H1 (cell line): ENCODE measurements at regions of chr12 and their contacts with region 1.

Region 1: GRCh38 chr12:53321074-53321814 is at the start of gene AAAS:
- DNase-seq: peak; percentile 76 to 98
- H3K4me3 ChIP-seq: peak within 1 kb of the TSS; percentile 71 to 97 (median 94)
- H3K27ac ChIP-seq: peak within 1 kb of the TSS; percentile 95
- H3K4me1 ChIP-seq: peaks cover 0 to 13% (median 9%) of the 10 kb centered on the region in 4 experiments; a peak in 5 of 7 replicates
- H3K27me3 ChIP-seq: peaks cover 1 to 30% (median 23%) of the 10 kb centered on the region in 4 experiments
- CTCF ChIP-seq: peak; percentile 85 to 99 (median 98)
- EP300 ChIP-seq: no peak
- POLR2A ChIP-seq: peak; percentile 86 to 93
- RAD21 ChIP-seq: peak; percentile 21 to 48; a peak in 2 of 4 replicates
- total RNA-seq, gene AAAS: 66.1 and 68.2 TPM in 2 replicates

Region 2: GRCh38 chr12:53042607-53043454 is 278.4 kb before region 1 on chr12:
- CTCF ChIA-PET with region 1: no interaction called
- POLR2A ChIA-PET with region 1: no interaction called
- DNase-seq: no peak
- H3K4me3 ChIP-seq: no peak overlapping the region
- H3K27ac ChIP-seq: no peak overlapping the region
- H3K4me1 ChIP-seq: peaks cover 16 to 35% (median 22%) of the 10 kb centered on the region in 4 experiments
- H3K27me3 ChIP-seq: peaks cover 0 to 20% (median 17%) of the 10 kb centered on the region in 4 experiments; a peak in 6 of 7 replicates
- CTCF ChIP-seq: no peak
- EP300 ChIP-seq: no peak
- POLR2A ChIP-seq: no peak
- RAD21 ChIP-seq: no peak

Region 3: GRCh38 chr12:53068811-53069585 is 252.2 kb before region 1 on chr12:
- CTCF ChIA-PET with region 1: no interaction called
- POLR2A ChIA-PET with region 1: no interaction called
- DNase-seq: no peak
- H3K4me3 ChIP-seq: no peak overlapping the region
- H3K27ac ChIP-seq: no peak overlapping the region
- H3K4me1 ChIP-seq: peaks cover 4 to 16% (median 10%) of the 10 kb centered on the region in 4 experiments
- H3K27me3 ChIP-seq: peaks cover 0 to 2% (median 0%) of the 10 kb centered on the region in 4 experiments; a peak in 2 of 7 replicates
- CTCF ChIP-seq: no peak
- EP300 ChIP-seq: no peak
- POLR2A ChIP-seq: no peak
- RAD21 ChIP-seq: no peak

Region 4: GRCh38 chr12:53151039-53151438 is 170.2 kb before region 1 on chr12:
- CTCF ChIA-PET with region 1: no interaction called
- POLR2A ChIA-PET with region 1: no interaction called
- DNase-seq: peak in 1 of 2 experiments; percentile 35
- H3K4me3 ChIP-seq: no peak overlapping the region
- H3K27ac ChIP-seq: no peak overlapping the region
- H3K4me1 ChIP-seq: peaks cover 0 to 2% (median 0%) of the 10 kb centered on the region in 4 experiments; a peak in 2 of 7 replicates
- H3K27me3 ChIP-seq: no peaks in the 10 kb centered on the region; a peak in 1 of 7 replicates
- CTCF ChIP-seq: no peak
- EP300 ChIP-seq: no peak
- POLR2A ChIP-seq: no peak
- RAD21 ChIP-seq: no peak

Region 5: DNA sequence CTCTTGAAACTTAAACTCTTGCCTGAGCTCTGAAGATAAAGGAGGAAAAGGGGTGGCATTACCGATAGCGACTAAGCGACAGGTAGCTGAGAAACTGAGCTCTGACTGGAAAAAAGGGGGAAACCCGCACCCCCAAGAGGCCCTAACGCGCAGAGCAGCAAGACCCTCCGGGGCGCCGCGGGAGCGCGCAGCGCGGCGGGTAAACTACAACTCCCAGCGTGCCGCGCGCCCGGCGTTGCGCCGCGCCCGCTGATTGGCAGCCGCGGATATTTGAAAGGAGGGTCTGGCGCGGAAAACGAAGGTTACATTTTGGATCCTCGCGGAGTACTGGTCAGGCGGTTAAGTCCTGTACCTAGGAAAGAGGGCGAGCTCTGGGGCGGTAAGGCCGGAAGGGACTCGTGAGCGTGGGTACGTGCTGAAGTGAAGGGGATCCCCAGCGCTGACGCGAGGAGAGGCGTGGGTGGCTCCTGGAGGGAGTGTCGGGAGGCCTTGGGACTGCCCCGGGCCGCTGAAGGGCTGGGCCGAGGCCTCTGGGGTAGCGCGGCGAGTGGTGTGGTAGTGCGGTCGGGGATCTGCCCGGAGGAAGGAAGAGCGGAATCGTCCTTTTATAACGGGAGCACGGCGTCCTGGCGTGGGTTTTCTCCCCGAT is 53.1 kb before region 1 on chr12 and contains the start of gene ESPL1:
- CTCF ChIA-PET with region 1: interaction called, 17 read pairs
- POLR2A ChIA-PET with region 1: interaction called, 10 read pairs
- DNase-seq: peak; percentile 54 to 92
- H3K4me3 ChIP-seq: peak within 1 kb of the TSS; percentile 82 to 97 (median 90)
- H3K27ac ChIP-seq: no peak within 1 kb of the TSS
- H3K4me1 ChIP-seq: peaks cover 3 to 11% (median 5%) of the 10 kb centered on the region in 4 experiments; a peak in 5 of 7 replicates
- H3K27me3 ChIP-seq: peaks cover 0 to 2% (median 0%) of the 10 kb centered on the region in 4 experiments; a peak in 1 of 7 replicates
- CTCF ChIP-seq: peak; percentile 41 to 61 (median 50)
- EP300 ChIP-seq: no peak
- POLR2A ChIP-seq: no peak
- RAD21 ChIP-seq: peak; percentile 63 to 69
- total RNA-seq, gene ESPL1: 47.0 and 52.7 TPM in 2 replicates

Region 6: GRCh38 chr12:53308276-53308675 is 13.0 kb before region 1 on chr12:
- CTCF ChIA-PET with region 1: interaction called, 52 read pairs
- POLR2A ChIA-PET with region 1: interaction called, 15 read pairs
- DNase-seq: no peak
- H3K4me3 ChIP-seq: no peak overlapping the region
- H3K27ac ChIP-seq: no peak overlapping the region
- H3K4me1 ChIP-seq: no peaks in the 10 kb centered on the region
- H3K27me3 ChIP-seq: no peaks in the 10 kb centered on the region
- CTCF ChIP-seq: no peak
- EP300 ChIP-seq: no peak
- POLR2A ChIP-seq: no peak
- RAD21 ChIP-seq: no peak

Region 7: GRCh38 chr12:53379389-53380103 is 58.3 kb after region 1 on chr12:
- CTCF ChIA-PET with region 1: interaction called, 25 read pairs
- POLR2A ChIA-PET with region 1: interaction called, 7 read pairs
- DNase-seq: peak; percentile 86 to 100
- H3K4me3 ChIP-seq: peak overlapping the region; percentile 50 to 72 (median 56)
- H3K27ac ChIP-seq: peak overlapping the region; percentile 96
- H3K4me1 ChIP-seq: peaks cover 6 to 26% (median 14%) of the 10 kb centered on the region in 4 experiments
- H3K27me3 ChIP-seq: no peaks in the 10 kb centered on the region
- CTCF ChIP-seq: no peak
- EP300 ChIP-seq: no peak
- POLR2A ChIP-seq: peak; percentile 93 to 98
- RAD21 ChIP-seq: no peak

Region 8: DNA sequence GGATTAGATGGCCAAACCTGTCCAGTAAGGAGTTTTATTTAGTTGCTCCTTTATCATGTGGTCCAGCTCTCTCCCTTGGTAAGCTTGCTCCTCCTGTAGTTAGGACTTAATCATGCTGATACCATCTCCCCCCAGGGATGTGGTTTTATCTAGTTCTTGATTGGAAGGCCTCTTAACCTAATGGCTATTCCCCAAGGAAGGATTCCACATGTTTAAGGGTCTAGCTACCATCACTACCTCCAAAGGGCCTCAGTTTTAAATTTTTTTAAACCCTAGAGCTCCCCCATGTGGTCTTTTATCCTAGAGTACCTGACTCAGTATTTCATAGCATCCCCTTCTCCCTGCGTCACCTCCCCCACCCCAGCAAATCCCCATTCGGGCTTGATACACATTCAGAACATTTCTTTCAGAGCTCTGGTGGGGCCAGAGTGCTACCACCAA is 155.5 kb after region 1 on chr12:
- CTCF ChIA-PET with region 1: interaction called, 12 read pairs
- POLR2A ChIA-PET with region 1: interaction called, 22 read pairs
- DNase-seq: no peak
- H3K4me3 ChIP-seq: no peak overlapping the region
- H3K27ac ChIP-seq: no peak overlapping the region
- H3K4me1 ChIP-seq: peaks cover 0 to 9% (median 1%) of the 10 kb centered on the region in 4 experiments; a peak in 3 of 7 replicates
- H3K27me3 ChIP-seq: no peaks in the 10 kb centered on the region
- CTCF ChIP-seq: peak in 2 of 3 experiments; percentile 37 to 47; a peak in 2 of 4 replicates
- EP300 ChIP-seq: no peak
- POLR2A ChIP-seq: peak; percentile 42 to 71; a peak in 2 of 3 replicates
- RAD21 ChIP-seq: peak in 1 of 2 experiments; percentile 35; a peak in 1 of 4 replicates

Region 9: DNA sequence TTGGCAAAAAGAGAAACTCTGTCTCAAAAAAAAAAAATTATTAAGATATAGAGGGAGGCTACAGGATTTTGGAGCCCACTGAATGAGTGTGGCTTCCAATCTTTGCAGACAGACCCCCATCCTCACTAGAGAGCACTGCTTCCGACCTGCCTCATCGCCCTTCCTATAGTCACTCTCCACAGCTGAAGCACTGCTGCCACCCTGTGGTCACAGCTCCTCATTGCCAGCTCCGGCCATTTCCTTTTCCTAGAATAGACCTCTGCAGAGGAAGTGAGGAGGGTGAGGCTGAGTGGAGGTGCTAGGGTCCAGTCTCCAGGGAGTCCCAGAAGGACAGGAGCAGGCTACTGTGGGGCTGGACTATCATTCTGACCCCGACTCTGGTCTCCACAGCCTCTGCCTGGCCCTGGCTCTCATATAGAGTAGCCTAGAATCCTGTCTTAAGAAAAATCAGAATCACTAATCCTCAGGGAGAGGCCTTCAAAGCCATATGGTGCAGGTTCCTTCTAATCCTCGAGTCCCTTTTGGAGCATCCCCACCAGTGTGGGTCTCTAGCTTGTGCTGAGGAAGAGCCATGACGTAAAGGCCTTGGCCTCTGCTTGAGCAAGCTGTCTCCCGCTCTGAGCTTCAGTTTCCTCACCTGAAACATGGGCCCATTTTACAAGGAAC is 187.4 kb after region 1 on chr12:
- CTCF ChIA-PET with region 1: interaction called, 16 read pairs
- POLR2A ChIA-PET with region 1: interaction called, 3 read pairs
- DNase-seq: peak; percentile 77 to 97
- H3K4me3 ChIP-seq: no peak overlapping the region
- H3K27ac ChIP-seq: no peak overlapping the region
- H3K4me1 ChIP-seq: no peaks in the 10 kb centered on the region
- H3K27me3 ChIP-seq: no peaks in the 10 kb centered on the region
- CTCF ChIP-seq: peak; percentile 94 to 99 (median 98)
- EP300 ChIP-seq: no peak
- POLR2A ChIP-seq: no peak
- RAD21 ChIP-seq: peak; percentile 99

Region 10: DNA sequence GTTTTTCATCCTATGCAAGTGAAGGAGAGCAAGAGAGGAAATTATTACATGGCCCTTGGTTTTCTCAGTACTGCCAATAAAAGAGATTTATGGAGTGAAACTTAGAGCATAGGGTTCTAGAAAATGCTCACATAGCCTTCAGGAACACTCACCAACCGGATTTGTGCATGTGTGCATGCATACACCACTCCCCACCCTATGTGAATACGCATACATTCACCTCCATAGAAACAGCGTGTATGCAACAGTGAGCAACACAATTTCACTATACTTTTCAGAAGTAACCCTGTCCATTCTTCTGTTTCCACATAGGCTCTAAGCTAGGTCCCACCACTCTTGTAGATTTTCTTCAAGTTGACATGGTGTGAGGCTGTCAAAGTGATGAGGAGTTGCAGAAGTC is 585.9 kb after region 1 on chr12:
- CTCF ChIA-PET with region 1: no interaction called
- POLR2A ChIA-PET with region 1: no interaction called
- DNase-seq: no peak
- H3K4me3 ChIP-seq: no peak overlapping the region
- H3K27ac ChIP-seq: no peak overlapping the region
- H3K4me1 ChIP-seq: no peaks in the 10 kb centered on the region; a peak in 1 of 7 replicates
- H3K27me3 ChIP-seq: peaks cover 0 to 4% (median 2%) of the 10 kb centered on the region in 4 experiments; a peak in 5 of 7 replicates
- CTCF ChIP-seq: no peak
- EP300 ChIP-seq: no peak
- POLR2A ChIP-seq: no peak
- RAD21 ChIP-seq: no peak